Activated CD4-positive, alpha-beta T cell treated with anti-CD3 and anti-CD28 coated beads for 36 hours (primary cell): ENCODE measurements at regions of chr2 and their contacts with region 1.

Region 1: GRCh38 chr2:76599732-76600368 is 889.1 kb upstream of the GCFC2 start:
- DNase-seq: peak; percentile 20
- ATAC-seq: peak; percentile 42
- H3K4me3 Mint-ChIP-seq: no peak overlapping the region
- H3K27ac Mint-ChIP-seq: no peak overlapping the region
- H3K4me1 Mint-ChIP-seq: no peaks in the 10 kb centered on the region
- H3K27me3 Mint-ChIP-seq: no peaks in the 10 kb centered on the region

Region 2: DNA sequence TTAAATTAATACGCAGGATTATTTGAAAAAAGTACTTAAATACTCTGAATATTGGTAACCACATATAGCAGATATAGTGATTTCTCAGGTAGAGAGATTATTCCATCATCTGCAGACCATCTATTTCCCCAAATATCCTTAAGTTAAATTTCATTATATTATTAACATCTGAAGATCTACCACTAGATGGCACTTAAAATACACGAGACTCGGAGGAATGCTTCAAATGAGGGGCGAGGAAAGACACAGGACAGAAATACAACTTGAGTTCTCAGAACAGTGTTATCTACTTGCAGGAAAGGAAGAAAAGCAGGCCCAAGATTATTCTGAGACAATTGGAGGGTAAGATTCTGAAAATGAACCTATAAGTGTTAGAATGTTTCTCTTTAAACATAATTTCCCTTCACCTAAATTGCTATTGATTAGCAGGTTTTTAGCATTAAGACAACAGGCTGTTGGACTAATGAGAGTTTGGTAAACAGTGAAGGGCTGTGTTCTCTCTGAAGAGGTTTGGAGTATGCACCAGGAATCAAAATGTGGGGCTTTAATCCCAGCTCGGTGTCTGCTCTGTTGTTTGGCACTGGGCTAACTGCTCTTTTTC is 812.2 kb before region 1 on chr2:
- CTCF ChIA-PET with region 1: no interaction called
- POLR2A ChIA-PET with region 1: no interaction called
- intact Hi-C with region 1: loop called (anchors 1 to 5 kb)
- DNase-seq: no peak
- ATAC-seq: no peak
- H3K4me3 Mint-ChIP-seq: no peak overlapping the region
- H3K27ac Mint-ChIP-seq: no peak overlapping the region
- H3K4me1 Mint-ChIP-seq: no peaks in the 10 kb centered on the region
- H3K27me3 Mint-ChIP-seq: peaks cover 4% of the 10 kb centered on the region